MCF 10A (cell line): ENCODE measurements at regions of chr5 and their contacts with region 1.

Region 1: DNA sequence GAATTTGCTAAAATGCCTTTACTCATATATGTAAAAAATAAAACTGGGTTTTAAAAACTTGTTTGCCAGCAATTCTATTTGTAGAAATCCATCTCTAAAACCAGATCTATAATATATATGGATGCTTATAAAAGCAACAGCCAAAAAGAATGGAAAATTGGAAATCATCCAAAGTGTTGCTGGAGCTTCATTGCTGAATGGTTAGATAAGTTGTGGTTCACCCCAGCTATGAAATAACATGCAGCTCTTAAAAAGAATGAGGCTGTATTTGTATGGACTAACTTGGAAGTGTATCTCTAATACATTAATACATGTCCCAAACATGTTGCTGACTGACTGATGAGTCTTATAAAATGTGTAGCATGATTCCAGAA is 76.2 kb downstream of the STK10 start:
- DNase-seq: peak; percentile 32
- H3K4me3 Mint-ChIP-seq: no peak overlapping the region
- H3K27ac Mint-ChIP-seq: peak overlapping the region; percentile 85
- H3K4me1 Mint-ChIP-seq: peaks cover 36% of the 10 kb centered on the region
- H3K27me3 Mint-ChIP-seq: no peaks in the 10 kb centered on the region
- CTCF ChIP-seq: no peak

Region 2: GRCh38 chr5:171175746-171176145 is 936.1 kb before region 1 on chr5:
- CTCF ChIA-PET with region 1: no interaction called
- POLR2A ChIA-PET with region 1: no interaction called
- intact Hi-C with region 1: no loop called
- DNase-seq: no peak
- H3K4me3 Mint-ChIP-seq: no peak overlapping the region
- H3K27ac Mint-ChIP-seq: no peak overlapping the region
- H3K4me1 Mint-ChIP-seq: no peaks in the 10 kb centered on the region
- H3K27me3 Mint-ChIP-seq: no peaks in the 10 kb centered on the region
- CTCF ChIP-seq: no peak

Region 3: DNA sequence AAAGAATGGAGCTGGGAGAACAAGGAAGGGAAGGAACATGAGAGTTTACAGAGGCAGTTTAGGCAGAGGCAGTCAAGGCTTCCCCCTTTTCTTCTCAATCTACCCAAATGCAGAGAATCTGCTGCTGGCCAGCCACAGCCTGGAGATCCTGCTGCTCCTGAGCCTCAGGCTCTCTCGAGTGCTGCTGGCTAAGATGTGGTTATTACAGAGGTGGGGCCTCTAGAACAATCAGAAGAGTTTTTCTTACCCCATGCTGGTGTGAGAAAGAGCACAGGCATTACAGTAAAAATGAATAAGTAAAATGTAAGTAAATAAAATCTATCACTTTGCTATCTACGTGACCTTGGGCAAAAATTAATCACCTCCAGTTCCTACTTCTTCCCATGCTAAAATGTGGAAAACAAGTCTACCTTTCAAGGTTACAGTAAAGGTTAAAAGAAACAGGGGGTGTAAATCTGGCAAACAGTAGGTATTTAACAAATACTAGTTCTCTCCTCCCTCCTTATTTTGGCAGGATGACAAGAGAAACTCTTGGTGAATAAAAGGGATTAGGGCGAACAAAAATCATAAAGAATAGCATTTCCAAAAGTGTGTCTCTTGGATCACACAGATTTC is 136.5 kb before region 1 on chr5:
- CTCF ChIA-PET with region 1: no interaction called
- POLR2A ChIA-PET with region 1: no interaction called
- intact Hi-C with region 1: no loop called
- DNase-seq: peak; percentile 49
- H3K4me3 Mint-ChIP-seq: no peak overlapping the region
- H3K27ac Mint-ChIP-seq: peak overlapping the region; percentile 68
- H3K4me1 Mint-ChIP-seq: peaks cover 37% of the 10 kb centered on the region
- H3K27me3 Mint-ChIP-seq: no peaks in the 10 kb centered on the region
- CTCF ChIP-seq: no peak

Region 4: GRCh38 chr5:172123269-172123692 is 11.4 kb after region 1 on chr5:
- CTCF ChIA-PET with region 1: interaction called, 9 read pairs
- POLR2A ChIA-PET with region 1: interaction called, 3 read pairs
- intact Hi-C with region 1: loop called (anchors 1 kb)
- DNase-seq: peak; percentile 73
- H3K4me3 Mint-ChIP-seq: no peak overlapping the region
- H3K27ac Mint-ChIP-seq: no peak overlapping the region
- H3K4me1 Mint-ChIP-seq: peaks cover 2% of the 10 kb centered on the region
- H3K27me3 Mint-ChIP-seq: no peaks in the 10 kb centered on the region
- CTCF ChIP-seq: no peak